Activated B cell treated with CpG ODN at 0.5 μM for 24 hours (primary cell): ENCODE measurements at regions of chr12 and their contacts with region 1.

Region 1: GRCh38 chr12:42482445-42483237 is 106.9 kb downstream of the PRICKLE1 start:
- DNase-seq: peak; percentile 89
- ATAC-seq: peak; percentile 76
- H3K4me3 Mint-ChIP-seq: peak overlapping the region; percentile 94
- H3K27ac Mint-ChIP-seq: peak overlapping the region; percentile 86
- H3K4me1 Mint-ChIP-seq: peaks cover 58% of the 10 kb centered on the region
- H3K27me3 Mint-ChIP-seq: no peaks in the 10 kb centered on the region
- CTCF ChIP-seq: no peak

Region 2: DNA sequence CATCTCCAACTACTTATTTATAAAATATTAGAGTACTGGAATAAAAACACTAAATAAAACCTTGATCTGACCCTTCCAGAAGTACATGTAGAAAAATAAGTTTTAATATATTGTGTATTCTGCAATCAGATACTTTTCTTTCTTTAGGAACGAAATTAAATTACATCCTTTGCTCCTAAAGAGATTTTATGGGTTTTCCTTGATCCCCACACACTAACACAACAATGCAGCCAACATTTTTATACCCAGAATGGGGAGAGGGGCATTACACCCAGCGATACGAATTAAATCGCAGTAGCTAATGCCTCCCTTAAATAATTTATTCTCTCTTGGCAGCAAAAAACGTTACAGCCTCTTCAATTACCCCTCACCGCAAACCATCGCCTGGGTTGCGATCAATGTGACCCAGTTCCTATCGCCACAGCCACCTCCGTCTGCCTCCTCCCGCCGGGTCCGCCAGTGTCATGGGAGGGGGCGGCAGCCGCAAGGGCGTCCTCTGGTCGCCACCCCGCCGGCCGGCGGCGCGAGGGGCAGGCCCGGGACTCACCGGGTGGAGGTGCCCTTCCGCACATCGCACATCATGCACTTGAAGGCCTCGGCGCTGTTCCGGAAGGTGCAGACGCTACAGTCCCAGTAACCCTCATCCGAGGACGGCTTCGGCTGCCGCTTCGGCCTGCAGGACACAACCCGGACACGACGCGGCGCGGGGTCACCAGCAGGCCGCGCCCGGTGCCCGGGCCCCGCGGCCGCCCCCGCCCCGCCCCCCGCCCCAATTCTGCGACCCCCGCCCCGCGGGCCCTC is 245.4 kb before region 1 on chr12:
- CTCF ChIA-PET with region 1: no interaction called
- POLR2A ChIA-PET with region 1: no interaction called
- intact Hi-C with region 1: loop called (anchors 1 kb)
- DNase-seq: peak; percentile 69
- ATAC-seq: peak; percentile 78
- H3K4me3 Mint-ChIP-seq: peak overlapping the region; percentile 93
- H3K27ac Mint-ChIP-seq: peak overlapping the region; percentile 92
- H3K4me1 Mint-ChIP-seq: peaks cover 37% of the 10 kb centered on the region
- H3K27me3 Mint-ChIP-seq: no peaks in the 10 kb centered on the region
- CTCF ChIP-seq: no peak

Region 3: GRCh38 chr12:42255221-42255865 is 227.3 kb before region 1 on chr12:
- CTCF ChIA-PET with region 1: no interaction called
- POLR2A ChIA-PET with region 1: no interaction called
- intact Hi-C with region 1: no loop called
- DNase-seq: no peak
- ATAC-seq: no peak
- H3K4me3 Mint-ChIP-seq: no peak overlapping the region
- H3K27ac Mint-ChIP-seq: no peak overlapping the region
- H3K4me1 Mint-ChIP-seq: no peaks in the 10 kb centered on the region
- H3K27me3 Mint-ChIP-seq: peaks cover 2% of the 10 kb centered on the region
- CTCF ChIP-seq: no peak

Region 4: DNA sequence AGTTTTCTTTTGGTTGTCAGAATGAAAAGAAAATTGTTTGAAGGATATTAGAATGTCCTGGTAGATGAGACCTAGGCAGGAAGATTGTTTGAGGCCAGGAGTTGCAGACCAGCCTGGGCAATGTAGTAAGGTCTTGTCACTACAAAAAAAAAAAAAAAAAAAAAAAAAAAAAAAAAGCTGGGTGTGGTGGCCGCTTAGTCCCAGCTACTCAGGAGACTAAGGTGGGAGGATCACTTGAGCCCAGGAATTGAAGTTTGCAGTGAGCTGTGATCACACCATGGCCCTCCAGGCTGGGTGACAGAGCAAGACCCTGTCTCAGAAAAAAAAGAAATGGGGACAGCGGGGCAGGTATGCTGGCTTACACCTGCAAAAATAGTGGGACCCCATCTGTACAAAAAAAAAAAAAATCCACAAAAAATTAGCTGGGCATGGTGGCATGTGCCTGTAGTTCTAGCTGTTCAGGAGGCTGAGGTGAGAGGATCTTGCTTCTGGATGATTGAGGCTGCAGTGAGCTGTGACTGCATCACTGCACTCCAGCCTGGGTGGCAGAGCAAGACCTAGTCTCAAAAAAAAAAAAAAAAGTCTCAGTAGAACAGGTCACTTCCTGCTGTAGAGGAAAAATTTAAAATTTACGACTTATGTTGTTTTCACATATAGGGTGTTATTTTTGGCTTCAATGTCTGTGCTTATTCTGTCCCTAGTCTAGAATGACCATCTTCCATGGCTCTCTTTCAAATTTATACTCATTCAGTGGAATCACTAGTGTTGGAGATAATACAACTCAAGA is 86.0 kb before region 1 on chr12:
- CTCF ChIA-PET with region 1: no interaction called
- POLR2A ChIA-PET with region 1: no interaction called
- intact Hi-C with region 1: loop called (anchors 5 kb)
- DNase-seq: no peak
- ATAC-seq: peak; percentile 62
- H3K4me3 Mint-ChIP-seq: no peak overlapping the region
- H3K27ac Mint-ChIP-seq: peak overlapping the region; percentile 41
- H3K4me1 Mint-ChIP-seq: peaks cover 20% of the 10 kb centered on the region
- H3K27me3 Mint-ChIP-seq: no peaks in the 10 kb centered on the region
- CTCF ChIP-seq: no peak

Region 5: DNA sequence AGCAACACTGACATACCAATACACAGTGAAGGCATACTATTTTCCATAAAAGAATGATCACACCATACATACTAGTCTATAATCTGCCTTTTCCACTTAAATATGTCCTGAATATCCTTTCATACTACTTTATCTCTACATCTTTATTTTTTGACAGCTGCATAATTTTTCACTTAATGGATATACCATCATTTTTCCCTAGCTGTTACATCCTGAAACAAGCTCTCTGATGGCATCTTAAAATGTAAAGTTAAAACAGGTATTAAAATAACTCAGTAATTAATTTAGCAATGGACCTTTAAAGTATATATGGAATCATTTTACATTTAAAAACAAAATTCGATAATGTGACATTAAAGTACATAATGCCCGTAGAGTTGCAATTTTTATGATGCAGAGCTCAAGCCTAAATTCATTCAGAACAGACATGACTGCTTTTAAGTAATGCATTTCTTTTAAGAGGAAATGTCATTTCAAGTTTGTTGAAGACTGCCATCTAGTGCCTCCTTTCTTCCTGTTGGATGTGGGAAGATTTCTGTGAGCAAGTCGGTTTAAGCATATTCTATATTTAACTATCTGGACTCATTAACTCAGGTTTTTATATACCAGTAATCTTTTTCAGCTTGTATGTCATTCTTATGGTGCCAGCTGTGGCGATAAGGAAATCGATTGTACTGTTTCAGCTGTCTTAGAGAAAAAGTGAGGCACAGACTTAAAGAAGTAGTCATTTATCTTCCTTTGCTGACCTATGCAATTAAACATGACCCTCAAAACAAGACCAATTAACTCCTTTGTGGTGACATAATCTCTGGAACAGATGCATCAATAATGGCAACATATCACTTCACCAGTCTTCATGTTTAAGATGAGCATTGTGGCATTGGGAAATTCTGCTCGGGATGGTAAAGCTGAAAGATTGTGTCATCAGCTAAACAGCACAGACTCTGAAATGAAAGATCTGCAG is 86.6 kb after region 1 on chr12:
- CTCF ChIA-PET with region 1: interaction called, 26 read pairs
- POLR2A ChIA-PET with region 1: interaction called, 8 read pairs
- intact Hi-C with region 1: loop called (anchors 1 kb)
- DNase-seq: no peak
- ATAC-seq: no peak
- H3K4me3 Mint-ChIP-seq: no peak overlapping the region
- H3K27ac Mint-ChIP-seq: no peak overlapping the region
- H3K4me1 Mint-ChIP-seq: no peaks in the 10 kb centered on the region
- H3K27me3 Mint-ChIP-seq: no peaks in the 10 kb centered on the region
- CTCF ChIP-seq: no peak

Region 6: GRCh38 chr12:42652048-42652447 is 169.4 kb after region 1 on chr12:
- CTCF ChIA-PET with region 1: no interaction called
- POLR2A ChIA-PET with region 1: no interaction called
- intact Hi-C with region 1: no loop called
- DNase-seq: no peak
- ATAC-seq: no peak
- H3K4me3 Mint-ChIP-seq: no peak overlapping the region
- H3K27ac Mint-ChIP-seq: no peak overlapping the region
- H3K4me1 Mint-ChIP-seq: no peaks in the 10 kb centered on the region
- H3K27me3 Mint-ChIP-seq: peaks cover 1% of the 10 kb centered on the region
- CTCF ChIP-seq: no peak

Region 7: GRCh38 chr12:43336962-43337555 is 854.4 kb after region 1 on chr12:
- CTCF ChIA-PET with region 1: interaction called, 4 read pairs
- POLR2A ChIA-PET with region 1: no interaction called
- intact Hi-C with region 1: loop called (anchors 2 kb)
- DNase-seq: no peak
- ATAC-seq: no peak
- H3K4me3 Mint-ChIP-seq: no peak overlapping the region
- H3K27ac Mint-ChIP-seq: no peak overlapping the region
- H3K4me1 Mint-ChIP-seq: no peaks in the 10 kb centered on the region
- H3K27me3 Mint-ChIP-seq: peaks cover 3% of the 10 kb centered on the region
- CTCF ChIP-seq: no peak

Region 8: GRCh38 chr12:43882578-43883178 is 1400.0 kb after region 1 on chr12:
- CTCF ChIA-PET with region 1: no interaction called
- POLR2A ChIA-PET with region 1: no interaction called
- intact Hi-C with region 1: loop called (anchors 1 kb)
- DNase-seq: no peak
- ATAC-seq: peak; percentile 75
- H3K4me3 Mint-ChIP-seq: no peak overlapping the region
- H3K27ac Mint-ChIP-seq: no peak overlapping the region
- H3K4me1 Mint-ChIP-seq: no peaks in the 10 kb centered on the region
- H3K27me3 Mint-ChIP-seq: no peaks in the 10 kb centered on the region
- CTCF ChIP-seq: peak; percentile 78